Naive thymus-derived CD4-positive, alpha-beta T cell (primary cell): ENCODE measurements at regions of chr20 and their contacts with region 1.

Region 1: DNA sequence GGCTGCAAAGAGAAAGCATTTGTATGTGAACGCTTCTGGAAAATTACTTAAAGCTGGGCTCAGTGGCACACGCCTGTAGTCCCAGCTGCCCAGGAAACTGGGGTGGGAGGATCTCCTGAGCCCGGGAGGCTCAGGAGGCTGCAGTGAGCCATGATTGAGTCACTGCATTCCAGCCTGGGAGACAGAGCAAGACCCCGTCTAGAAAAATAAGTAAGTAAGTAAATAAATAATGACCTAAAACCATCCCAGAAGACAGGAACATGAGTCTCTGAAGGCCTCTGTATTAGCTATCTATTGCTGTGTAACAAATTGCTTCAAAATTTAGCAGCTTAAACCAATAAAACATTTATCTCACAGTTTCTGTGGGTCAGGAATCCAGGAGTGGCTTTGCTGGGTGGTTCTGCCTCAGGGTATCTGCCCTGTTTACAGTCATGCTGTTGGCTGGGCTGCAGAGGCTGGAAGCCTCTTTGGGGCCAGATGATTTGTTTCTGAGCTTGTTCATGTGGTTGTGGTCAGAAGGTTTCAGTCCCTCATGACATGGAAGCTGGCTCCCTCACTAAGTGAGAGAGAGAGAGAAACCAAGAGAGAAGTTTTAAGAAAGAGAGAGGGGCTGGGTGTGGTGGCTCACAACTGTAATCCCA is 48.4 kb upstream of the NCOA3 start:
- DNase-seq: peak in 1 of 9 donors; percentile 48
- ATAC-seq: no peak
- H3K4me3 ChIP-seq: no peak overlapping the region
- H3K4me3 Mint-ChIP-seq: peak overlapping the region in 1 of 10 donors; percentile 58
- H3K27ac ChIP-seq: no peak overlapping the region
- H3K27ac Mint-ChIP-seq: peak overlapping the region in 1 of 9 donors; percentile 85
- H3K4me1 ChIP-seq: no peaks in the 10 kb centered on the region
- H3K4me1 Mint-ChIP-seq: peaks cover 0 to 46% (median 0%) of the 10 kb centered on the region in 7 donors
- H3K27me3 ChIP-seq: no peaks in the 10 kb centered on the region
- H3K27me3 Mint-ChIP-seq: peaks cover 0 to 2% (median 0%) of the 10 kb centered on the region in 5 donors

Region 2: DNA sequence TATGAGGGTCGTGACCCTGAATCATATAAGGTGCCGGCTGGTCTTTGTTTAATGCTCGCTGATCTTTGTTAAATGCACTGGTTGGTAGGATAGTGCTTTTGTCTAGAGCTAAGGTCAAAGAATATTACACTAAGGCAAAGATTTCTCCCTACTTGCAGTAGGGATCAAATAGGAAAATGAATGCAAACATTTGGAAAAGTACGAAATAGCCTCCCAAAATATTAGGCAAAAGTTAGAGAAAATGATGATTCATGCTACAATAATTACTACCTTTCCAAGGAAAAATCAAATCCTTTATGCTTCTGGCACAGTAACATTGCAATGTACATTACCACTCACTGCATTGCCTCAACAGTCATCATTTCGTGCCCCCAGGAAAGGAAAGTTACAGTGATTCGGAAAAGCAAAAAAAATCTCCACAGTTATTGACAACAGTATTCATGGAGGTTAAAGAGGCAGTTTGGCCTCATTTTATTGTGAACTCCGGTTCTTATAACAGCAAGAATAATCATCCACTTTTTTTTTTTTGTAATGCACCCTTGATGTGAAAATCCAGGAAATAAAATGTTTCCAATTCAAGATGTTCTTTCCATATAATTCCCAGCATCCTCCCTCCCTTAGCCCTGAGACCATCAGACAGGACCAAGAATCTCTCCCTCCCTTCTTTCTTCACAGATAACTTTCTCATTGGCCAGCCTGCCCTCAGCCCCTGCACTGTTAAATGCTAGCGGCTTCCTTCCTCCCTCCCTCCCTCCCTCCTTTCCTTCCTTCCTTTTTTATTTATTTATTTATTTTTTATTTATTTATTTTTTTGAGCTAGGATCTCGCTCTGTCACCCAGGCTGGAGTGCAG is 35.0 kb before region 1 on chr20:
- CTCF ChIA-PET with region 1: interaction called, 3 read pairs
- POLR2A ChIA-PET with region 1: no interaction called
- intact Hi-C with region 1: loop called in 1 of 2 experiments (anchors 5 kb)
- DNase-seq: no peak
- ATAC-seq: no peak
- H3K4me3 ChIP-seq: no peak overlapping the region
- H3K4me3 Mint-ChIP-seq: no peak overlapping the region
- H3K27ac ChIP-seq: no peak overlapping the region
- H3K27ac Mint-ChIP-seq: peak overlapping the region in 2 of 9 donors; percentile 1 to 71
- H3K4me1 ChIP-seq: peaks cover 13 to 19% of the 10 kb centered on the region in 2 donors
- H3K4me1 Mint-ChIP-seq: peaks cover 14 to 39% (median 29%) of the 10 kb centered on the region in 7 donors
- H3K27me3 ChIP-seq: no peaks in the 10 kb centered on the region
- H3K27me3 Mint-ChIP-seq: no peaks in the 10 kb centered on the region

Region 3: GRCh38 chr20:47479506-47479905 is 26.2 kb after region 1 on chr20:
- CTCF ChIA-PET with region 1: no interaction called
- POLR2A ChIA-PET with region 1: no interaction called
- intact Hi-C with region 1: no loop called
- DNase-seq: no peak
- ATAC-seq: no peak
- H3K4me3 ChIP-seq: no peak overlapping the region
- H3K4me3 Mint-ChIP-seq: no peak overlapping the region
- H3K27ac ChIP-seq: no peak overlapping the region
- H3K27ac Mint-ChIP-seq: peak overlapping the region in 5 of 9 donors; percentile 14 to 79 (median 60)
- H3K4me1 ChIP-seq: no peaks in the 10 kb centered on the region
- H3K4me1 Mint-ChIP-seq: peaks cover 0 to 45% (median 0%) of the 10 kb centered on the region in 7 donors
- H3K27me3 ChIP-seq: no peaks in the 10 kb centered on the region
- H3K27me3 Mint-ChIP-seq: no peaks in the 10 kb centered on the region

Region 4: GRCh38 chr20:47540443-47541354 is 87.4 kb after region 1 on chr20:
- CTCF ChIA-PET with region 1: no interaction called
- POLR2A ChIA-PET with region 1: no interaction called
- intact Hi-C with region 1: no loop called
- DNase-seq: no peak
- ATAC-seq: peak; percentile 47
- H3K4me3 ChIP-seq: no peak overlapping the region
- H3K4me3 Mint-ChIP-seq: peak overlapping the region in 7 of 10 donors; percentile 0 to 60 (median 39)
- H3K27ac ChIP-seq: no peak overlapping the region
- H3K27ac Mint-ChIP-seq: peak overlapping the region in 8 of 9 donors; percentile 8 to 62 (median 22)
- H3K4me1 ChIP-seq: peaks cover 0 to 10% of the 10 kb centered on the region in 2 donors
- H3K4me1 Mint-ChIP-seq: peaks cover 55 to 92% (median 77%) of the 10 kb centered on the region in 7 donors
- H3K27me3 ChIP-seq: no peaks in the 10 kb centered on the region
- H3K27me3 Mint-ChIP-seq: no peaks in the 10 kb centered on the region